ENCODE measurements at regions of chr6 and their contacts with region 1.

Region 1: DNA sequence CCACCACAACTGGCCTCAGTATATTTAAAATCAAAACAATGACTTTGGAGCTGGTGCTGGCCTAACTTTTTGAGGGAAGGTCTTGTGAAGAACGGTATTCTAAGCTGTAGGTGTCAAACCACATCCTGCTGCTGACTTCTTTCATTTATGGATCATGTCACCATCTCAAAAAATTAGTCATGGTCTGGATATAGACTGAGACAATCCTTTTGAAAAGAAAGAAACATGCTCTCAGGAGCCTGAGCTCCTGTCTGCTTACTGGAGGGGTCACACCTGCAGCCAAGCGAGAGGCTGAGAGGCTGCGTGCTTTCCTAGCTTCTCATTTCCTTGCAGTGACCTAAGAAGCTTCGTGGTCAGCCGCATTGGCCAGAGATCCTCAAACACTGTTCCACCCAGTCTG is 55.2 kb downstream of the TIAM2 start:
- DNase-seq: peak; percentile 44
- H3K4me3 Mint-ChIP-seq: peak overlapping the region; percentile 76
- H3K27ac Mint-ChIP-seq: peak overlapping the region; percentile 95
- H3K4me1 Mint-ChIP-seq: peaks cover 43% of the 10 kb centered on the region
- H3K27me3 Mint-ChIP-seq: no peaks in the 10 kb centered on the region

Region 2: GRCh38 chr6:154247119-154247861 is 803.0 kb before region 1 on chr6:
- intact Hi-C with region 1: loop called (anchors 10 kb)
- DNase-seq: no peak
- H3K4me3 Mint-ChIP-seq: peak overlapping the region; percentile 85
- H3K27ac Mint-ChIP-seq: peak overlapping the region; percentile 76
- H3K4me1 Mint-ChIP-seq: peaks cover 87% of the 10 kb centered on the region
- H3K27me3 Mint-ChIP-seq: no peaks in the 10 kb centered on the region

Region 3: DNA sequence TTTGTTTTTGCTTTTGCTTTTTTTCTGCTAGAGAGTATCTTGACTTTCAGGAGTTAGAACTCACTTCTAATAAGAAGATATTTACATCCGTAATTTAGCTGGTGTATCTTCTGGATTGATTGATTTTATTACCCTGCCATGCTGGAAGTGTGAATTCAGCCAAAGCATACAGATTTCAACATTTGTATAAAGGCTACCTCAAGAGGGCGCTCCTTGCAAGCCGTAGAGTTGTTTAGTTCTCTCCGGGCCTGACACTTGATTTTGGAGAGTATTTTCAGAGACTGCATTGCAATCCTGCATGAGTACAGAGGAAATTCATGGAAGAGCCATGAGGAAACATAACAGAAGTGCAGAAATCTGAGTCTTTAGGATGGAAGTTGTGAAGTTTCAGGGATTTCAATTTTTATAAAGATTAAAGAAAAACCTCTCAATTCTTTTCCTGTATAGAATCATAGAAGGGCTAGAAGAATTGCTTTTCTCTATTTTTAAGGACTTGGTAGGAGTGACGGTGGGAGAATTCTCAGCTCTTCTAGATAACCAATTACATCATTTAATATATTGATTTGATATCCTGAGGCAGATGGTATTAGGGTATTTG is 121.9 kb before region 1 on chr6:
- intact Hi-C with region 1: loop called (anchors 1 kb)
- DNase-seq: peak; percentile 52
- H3K4me3 Mint-ChIP-seq: no peak overlapping the region
- H3K27ac Mint-ChIP-seq: peak overlapping the region; percentile 12
- H3K4me1 Mint-ChIP-seq: peaks cover 21% of the 10 kb centered on the region
- H3K27me3 Mint-ChIP-seq: no peaks in the 10 kb centered on the region

Region 4: GRCh38 chr6:155079985-155080452 is 29.7 kb after region 1 on chr6:
- intact Hi-C with region 1: loop called (anchors 1 kb)
- DNase-seq: no peak
- H3K4me3 Mint-ChIP-seq: peak overlapping the region; percentile 11
- H3K27ac Mint-ChIP-seq: peak overlapping the region; percentile 79
- H3K4me1 Mint-ChIP-seq: peaks cover 50% of the 10 kb centered on the region
- H3K27me3 Mint-ChIP-seq: peaks cover 2% of the 10 kb centered on the region

Region 5: GRCh38 chr6:155117266-155117665 is 67.0 kb after region 1 on chr6:
- intact Hi-C with region 1: loop called (anchors 1 kb)
- DNase-seq: no peak
- H3K4me3 Mint-ChIP-seq: no peak overlapping the region
- H3K27ac Mint-ChIP-seq: peak overlapping the region; percentile 68
- H3K4me1 Mint-ChIP-seq: peaks cover 47% of the 10 kb centered on the region
- H3K27me3 Mint-ChIP-seq: peaks cover 2% of the 10 kb centered on the region

Region 6: GRCh38 chr6:155143029-155143577 is 92.8 kb after region 1 on chr6:
- intact Hi-C with region 1: loop called (anchors 1 kb)
- DNase-seq: no peak
- H3K4me3 Mint-ChIP-seq: peak overlapping the region; percentile 73
- H3K27ac Mint-ChIP-seq: peak overlapping the region; percentile 85
- H3K4me1 Mint-ChIP-seq: peaks cover 65% of the 10 kb centered on the region
- H3K27me3 Mint-ChIP-seq: no peaks in the 10 kb centered on the region

Region 7: DNA sequence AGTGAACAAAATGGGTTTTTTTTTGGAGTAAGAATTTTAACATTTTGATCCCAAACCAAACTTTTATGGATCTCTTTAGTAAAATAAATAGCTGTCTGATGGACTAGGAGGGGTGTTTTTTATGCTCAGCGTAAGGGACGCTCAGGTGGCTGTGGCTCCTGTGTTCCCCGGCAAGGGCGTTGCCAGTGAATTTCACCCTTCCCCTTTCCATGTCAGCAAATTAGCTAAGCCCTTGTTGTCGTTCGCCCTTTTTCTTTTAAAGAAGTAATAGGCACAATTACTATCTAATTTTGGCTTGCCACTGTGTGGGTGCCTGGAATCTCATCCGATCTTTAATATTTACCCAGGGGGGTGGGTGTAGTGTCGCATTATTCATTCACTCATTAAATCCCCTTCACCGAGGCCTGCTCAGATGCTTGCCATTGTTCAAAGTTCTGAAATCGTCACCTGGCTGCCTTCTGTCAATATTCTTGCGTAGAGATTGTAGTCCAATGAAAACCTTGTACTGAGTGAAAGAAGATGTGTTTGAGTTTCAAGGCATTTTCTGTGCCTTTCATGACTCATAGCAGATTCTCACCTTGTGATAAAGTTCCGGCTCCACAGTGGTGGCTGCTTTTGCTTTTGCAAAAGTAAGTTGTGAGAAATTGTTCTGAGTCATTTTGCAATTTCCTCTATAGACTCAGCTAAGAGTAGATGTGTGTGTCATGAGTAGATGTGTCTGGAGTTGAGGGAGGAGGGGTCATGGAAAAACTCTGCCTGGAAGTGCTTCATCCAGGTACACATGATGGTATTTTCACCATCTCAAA is 173.5 kb after region 1 on chr6:
- intact Hi-C with region 1: loop called (anchors 1 kb)
- DNase-seq: peak; percentile 65
- H3K4me3 Mint-ChIP-seq: peak overlapping the region; percentile 70
- H3K27ac Mint-ChIP-seq: peak overlapping the region; percentile 91
- H3K4me1 Mint-ChIP-seq: peaks cover 34% of the 10 kb centered on the region
- H3K27me3 Mint-ChIP-seq: peaks cover 2% of the 10 kb centered on the region

Region 8: DNA sequence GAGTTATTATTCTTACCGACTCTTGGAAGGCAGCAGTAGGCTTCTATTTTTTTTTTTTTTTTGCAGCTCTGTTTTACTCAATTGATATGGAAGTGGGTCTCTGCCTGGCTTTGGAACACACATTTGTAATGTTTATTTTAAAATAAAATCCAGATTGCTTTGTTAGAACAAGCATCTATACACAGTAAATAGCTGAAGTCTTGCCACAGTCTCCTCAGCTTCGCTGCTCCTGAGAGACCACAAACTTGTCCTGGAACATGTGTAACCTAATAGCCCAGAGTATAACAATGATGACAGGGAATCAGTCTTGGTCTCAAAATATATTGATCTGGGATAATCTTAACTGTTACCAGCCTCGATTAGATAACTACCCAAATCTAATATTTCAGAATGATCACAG is 705.1 kb after region 1 on chr6:
- intact Hi-C with region 1: no loop called
- DNase-seq: no peak
- H3K4me3 Mint-ChIP-seq: no peak overlapping the region
- H3K27ac Mint-ChIP-seq: no peak overlapping the region
- H3K4me1 Mint-ChIP-seq: no peaks in the 10 kb centered on the region
- H3K27me3 Mint-ChIP-seq: no peaks in the 10 kb centered on the region